PC-9 (cell line): ENCODE measurements at regions of chr4 and their contacts with region 1.

Region 1: GRCh38 chr4:128725405-128726055 is 84.0 kb upstream of the JADE1 start:
- DNase-seq: no peak
- H3K4me3 ChIP-seq: no peak overlapping the region
- H3K27ac ChIP-seq: no peak overlapping the region
- H3K4me1 ChIP-seq: no peaks in the 10 kb centered on the region
- H3K27me3 ChIP-seq: no peaks in the 10 kb centered on the region
- CTCF ChIP-seq: no peak

Region 2: DNA sequence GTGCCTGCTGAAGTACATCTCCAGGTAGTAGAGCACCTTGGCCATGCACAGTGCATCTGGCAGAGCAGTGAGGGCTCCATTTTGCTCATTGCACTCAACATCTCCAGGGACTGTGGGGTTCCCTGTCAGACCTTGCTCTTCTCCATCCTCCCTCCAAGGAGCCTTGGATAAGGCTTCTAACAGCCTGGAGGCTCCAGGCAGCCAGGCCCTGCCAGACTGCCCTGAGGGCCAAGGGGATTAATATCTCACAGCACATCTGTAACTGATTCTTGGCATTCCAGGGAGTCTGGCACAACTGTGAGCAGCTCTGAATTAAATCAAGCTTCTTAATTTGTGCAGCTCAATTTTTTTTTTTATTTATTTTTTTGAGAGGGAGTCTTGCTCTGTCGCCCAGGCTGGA is 213.4 kb before region 1 on chr4:
- CTCF ChIA-PET with region 1: interaction called, 10 read pairs
- POLR2A ChIA-PET with region 1: no interaction called
- intact Hi-C with region 1: no loop called
- DNase-seq: no peak
- H3K4me3 ChIP-seq: no peak overlapping the region
- H3K27ac ChIP-seq: no peak overlapping the region
- H3K4me1 ChIP-seq: peaks cover 8% of the 10 kb centered on the region
- H3K27me3 ChIP-seq: no peaks in the 10 kb centered on the region
- CTCF ChIP-seq: no peak

Region 3: GRCh38 chr4:128737098-128737513 is 11.6 kb after region 1 on chr4:
- CTCF ChIA-PET with region 1: no interaction called
- POLR2A ChIA-PET with region 1: no interaction called
- intact Hi-C with region 1: no loop called
- DNase-seq: no peak
- H3K4me3 ChIP-seq: no peak overlapping the region
- H3K27ac ChIP-seq: no peak overlapping the region
- H3K4me1 ChIP-seq: no peaks in the 10 kb centered on the region
- H3K27me3 ChIP-seq: no peaks in the 10 kb centered on the region
- CTCF ChIP-seq: no peak